ENCODE measurements at regions of chr9 and their contacts with region 1.

Region 1: DNA sequence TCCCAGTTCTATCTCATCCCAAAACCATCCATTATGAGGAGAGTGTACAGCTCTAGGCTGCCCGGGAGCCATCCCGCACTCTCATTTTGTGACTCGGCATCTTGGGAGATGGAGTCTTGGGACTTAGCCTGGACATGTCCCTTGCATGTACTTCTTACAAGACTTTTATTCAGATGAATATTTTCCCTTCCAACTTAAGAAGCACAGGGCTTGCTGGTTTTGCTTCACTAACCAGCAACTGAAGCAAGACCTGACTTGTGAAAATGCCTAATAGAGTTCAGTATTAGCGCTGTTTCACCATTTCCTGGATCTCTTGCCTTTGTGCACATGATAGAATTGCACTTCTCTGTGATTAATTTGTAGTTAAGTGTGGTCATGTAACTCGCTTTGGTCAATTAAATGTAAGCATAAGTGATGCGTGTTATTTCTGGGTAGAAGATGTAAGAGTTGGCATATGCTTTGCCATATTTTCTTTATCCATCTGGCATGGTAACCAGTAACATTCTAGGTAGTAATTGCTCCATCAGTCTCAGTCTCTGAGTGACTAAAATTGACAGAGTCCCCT is 55.8 kb downstream of the PDCD1LG2 start:
- DNase-seq: no peak
- ATAC-seq: no peak
- H3K4me3 ChIP-seq: no peak overlapping the region
- H3K4me3 Mint-ChIP-seq: no peak overlapping the region
- H3K27ac ChIP-seq: no peak overlapping the region
- H3K27ac Mint-ChIP-seq: no peak overlapping the region
- H3K4me1 ChIP-seq: peaks cover 22% of the 10 kb centered on the region
- H3K4me1 Mint-ChIP-seq: peaks cover 25% of the 10 kb centered on the region
- H3K27me3 ChIP-seq: no peaks in the 10 kb centered on the region
- H3K27me3 Mint-ChIP-seq: no peaks in the 10 kb centered on the region
- CTCF ChIP-seq: no peak

Region 2: GRCh38 chr9:5518171-5518936 is 47.8 kb before region 1 on chr9:
- CTCF ChIA-PET with region 1: no interaction called
- POLR2A ChIA-PET with region 1: no interaction called
- intact Hi-C with region 1: loop called in 1 of 2 experiments (anchors 5 kb)
- DNase-seq: no peak
- ATAC-seq: no peak
- H3K4me3 ChIP-seq: no peak overlapping the region
- H3K4me3 Mint-ChIP-seq: no peak overlapping the region
- H3K27ac ChIP-seq: no peak overlapping the region
- H3K27ac Mint-ChIP-seq: no peak overlapping the region
- H3K4me1 ChIP-seq: peaks cover 4% of the 10 kb centered on the region
- H3K4me1 Mint-ChIP-seq: peaks cover 9% of the 10 kb centered on the region
- H3K27me3 ChIP-seq: no peaks in the 10 kb centered on the region
- H3K27me3 Mint-ChIP-seq: no peaks in the 10 kb centered on the region
- CTCF ChIP-seq: no peak

Region 3: DNA sequence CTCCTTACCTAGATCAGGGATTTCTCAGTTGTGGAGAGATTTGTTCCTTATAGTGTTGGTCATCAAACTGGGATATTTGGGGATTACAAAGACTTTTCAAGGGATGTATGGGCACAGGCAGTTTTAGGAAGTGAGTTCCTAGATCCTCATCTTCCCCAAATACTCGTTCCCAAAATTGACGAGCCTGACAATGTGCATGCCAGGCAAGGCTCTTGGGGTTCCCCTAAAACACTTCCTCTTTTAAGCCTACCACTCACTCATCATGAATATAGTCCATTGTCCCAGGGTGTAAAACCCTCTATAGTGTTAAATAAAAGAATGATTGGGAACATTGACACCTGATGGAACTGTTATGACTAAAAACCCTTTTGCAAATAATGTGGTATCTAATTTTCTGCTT is 29.5 kb before region 1 on chr9:
- CTCF ChIA-PET with region 1: no interaction called
- POLR2A ChIA-PET with region 1: no interaction called
- intact Hi-C with region 1: loop called in 1 of 2 experiments (anchors 2 kb)
- DNase-seq: peak in 1 of 9 experiments; percentile 26
- ATAC-seq: no peak
- H3K4me3 ChIP-seq: no peak overlapping the region
- H3K4me3 Mint-ChIP-seq: no peak overlapping the region
- H3K27ac ChIP-seq: no peak overlapping the region
- H3K27ac Mint-ChIP-seq: no peak overlapping the region
- H3K4me1 ChIP-seq: peaks cover 8% of the 10 kb centered on the region
- H3K4me1 Mint-ChIP-seq: peaks cover 15% of the 10 kb centered on the region
- H3K27me3 ChIP-seq: no peaks in the 10 kb centered on the region
- H3K27me3 Mint-ChIP-seq: no peaks in the 10 kb centered on the region
- CTCF ChIP-seq: no peak

Measured in CD8-positive, alpha-beta T cell (primary cell).